Testis (tissue), 5 donors: ENCODE measurements at regions of chr3 and their contacts with region 1.

Region 1: GRCh38 chr3:123028233-123028828 is 768 bp upstream of the SEMA5B start:
- DNase-seq: peak; percentile 50
- H3K4me3 ChIP-seq: peak overlapping the region; percentile 16 to 60
- H3K27ac ChIP-seq: no peak overlapping the region
- H3K4me1 ChIP-seq: peaks cover 26% of the 10 kb centered on the region
- H3K27me3 ChIP-seq: no peaks in the 10 kb centered on the region
- CTCF ChIP-seq: peak; percentile 24 to 55 (median 29)
- POLR2A ChIP-seq: no peak

Region 2: DNA sequence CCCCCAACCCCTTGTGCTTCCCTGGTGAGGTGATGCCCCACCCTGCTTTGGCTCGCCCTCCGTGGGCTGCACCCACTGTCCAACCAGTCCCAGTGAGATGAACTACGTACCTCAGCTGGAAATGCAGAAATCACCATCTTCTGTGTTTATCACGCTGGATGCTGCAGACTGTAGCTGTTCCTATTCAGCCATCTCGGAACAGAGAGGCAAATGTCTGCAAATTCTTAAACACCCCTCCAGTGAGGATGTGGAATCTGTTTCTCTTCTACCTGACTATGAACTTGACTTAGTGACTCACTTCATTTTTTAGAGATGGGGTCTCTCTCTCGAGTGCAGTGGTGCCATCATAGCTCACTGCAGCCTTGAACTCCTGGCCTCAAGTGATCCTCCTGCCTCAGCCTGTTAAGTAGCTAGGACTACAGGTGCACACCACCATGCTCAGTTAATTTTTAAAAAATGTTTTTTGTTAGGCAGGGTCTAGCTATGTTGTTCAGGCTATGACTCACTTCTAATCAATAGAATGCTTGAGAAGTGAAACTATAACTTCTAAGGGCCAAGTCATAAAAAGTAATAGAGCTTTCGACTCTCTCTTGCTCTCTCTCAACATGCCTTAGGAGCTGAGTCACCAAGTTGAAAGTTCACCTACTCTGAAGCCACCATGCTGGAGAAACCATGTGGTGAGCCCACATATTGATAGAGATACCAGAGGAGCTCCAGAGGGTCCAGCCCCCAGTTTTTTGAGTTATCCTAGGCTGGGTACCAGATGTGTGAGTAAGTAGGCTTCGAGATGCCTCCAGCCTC is 359.2 kb before region 1 on chr3:
- intact Hi-C with region 1: no loop called
- DNase-seq: no peak
- H3K4me3 ChIP-seq: no peak overlapping the region
- H3K27ac ChIP-seq: no peak overlapping the region
- H3K4me1 ChIP-seq: no peaks in the 10 kb centered on the region
- H3K27me3 ChIP-seq: no peaks in the 10 kb centered on the region
- CTCF ChIP-seq: no peak
- POLR2A ChIP-seq: no peak

Region 3: DNA sequence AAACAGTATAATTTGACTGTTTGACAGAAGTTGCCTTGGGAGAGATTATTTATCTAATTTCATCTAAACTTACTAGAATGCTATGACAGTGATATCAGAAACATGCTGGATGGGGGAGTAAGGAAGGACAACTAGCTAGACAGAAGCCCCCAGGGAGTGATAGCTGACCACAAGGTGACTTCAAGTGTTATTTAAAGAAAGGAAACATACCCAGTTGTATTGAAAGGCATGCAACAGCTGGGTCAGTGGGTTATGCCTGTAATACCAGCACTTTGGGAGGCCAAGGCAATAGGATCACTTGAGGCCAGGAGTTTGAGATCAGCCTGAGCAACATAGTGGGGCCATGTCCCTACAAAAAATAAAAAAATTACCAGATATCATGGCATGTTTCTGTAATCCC is 163.8 kb before region 1 on chr3:
- intact Hi-C with region 1: loop called (anchors 10 kb)
- DNase-seq: no peak
- H3K4me3 ChIP-seq: no peak overlapping the region
- H3K27ac ChIP-seq: no peak overlapping the region
- H3K4me1 ChIP-seq: no peaks in the 10 kb centered on the region
- H3K27me3 ChIP-seq: no peaks in the 10 kb centered on the region
- CTCF ChIP-seq: no peak
- POLR2A ChIP-seq: no peak

Region 4: GRCh38 chr3:122942937-122943827 is 85.1 kb before region 1 on chr3:
- intact Hi-C with region 1: loop called (anchors 10 kb)
- DNase-seq: peak; percentile 83
- H3K4me3 ChIP-seq: no peak overlapping the region
- H3K27ac ChIP-seq: no peak overlapping the region
- H3K4me1 ChIP-seq: peaks cover 4% of the 10 kb centered on the region
- H3K27me3 ChIP-seq: no peaks in the 10 kb centered on the region
- CTCF ChIP-seq: peak; percentile 69 to 75 (median 70)
- POLR2A ChIP-seq: no peak

Region 5: DNA sequence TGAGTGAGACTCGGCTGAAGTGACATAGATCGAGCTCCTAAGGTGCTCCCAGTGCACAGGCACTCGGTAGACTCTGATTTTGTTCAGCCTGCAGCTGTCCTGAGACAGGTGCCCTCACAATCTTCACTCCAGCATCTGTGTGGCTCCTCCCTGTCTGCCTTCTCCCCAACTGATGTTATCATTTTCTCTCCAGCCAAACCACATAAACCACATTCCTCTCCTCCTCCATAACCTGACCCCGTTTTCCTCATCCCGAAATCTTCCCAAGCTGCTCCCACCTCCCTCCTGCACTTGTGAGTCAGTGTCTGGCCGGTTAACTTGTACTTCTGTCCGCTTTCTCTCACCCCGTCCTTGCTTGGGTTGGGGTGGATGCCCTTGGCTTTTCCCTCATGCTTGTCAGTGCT is 649.8 kb after region 1 on chr3:
- intact Hi-C with region 1: no loop called
- DNase-seq: no peak
- H3K4me3 ChIP-seq: no peak overlapping the region
- H3K27ac ChIP-seq: peak overlapping the region in 1 of 2 donors; percentile 27
- H3K4me1 ChIP-seq: peaks cover 21% of the 10 kb centered on the region
- H3K27me3 ChIP-seq: no peaks in the 10 kb centered on the region
- CTCF ChIP-seq: no peak
- POLR2A ChIP-seq: no peak